ENCODE measurements at regions of chr1 and their contacts with region 1.

Region 1: GRCh38 chr1:155934097-155934935 is at the start of gene KHDC4:
- DNase-seq: peak; percentile 98

Region 2: GRCh38 chr1:155911156-155912055 is 22.9 kb before region 1 on chr1 and contains the start of gene RIT1:
- CTCF ChIA-PET with region 1: interaction called, 3 read pairs
- POLR2A ChIA-PET with region 1: interaction called, 13 read pairs
- DNase-seq: peak; percentile 93

Region 3: GRCh38 chr1:155946633-155947219 is 12.4 kb after region 1 on chr1:
- CTCF ChIA-PET with region 1: interaction called, 5 read pairs
- POLR2A ChIA-PET with region 1: interaction called, 25 read pairs
- DNase-seq: no peak

Region 4: DNA sequence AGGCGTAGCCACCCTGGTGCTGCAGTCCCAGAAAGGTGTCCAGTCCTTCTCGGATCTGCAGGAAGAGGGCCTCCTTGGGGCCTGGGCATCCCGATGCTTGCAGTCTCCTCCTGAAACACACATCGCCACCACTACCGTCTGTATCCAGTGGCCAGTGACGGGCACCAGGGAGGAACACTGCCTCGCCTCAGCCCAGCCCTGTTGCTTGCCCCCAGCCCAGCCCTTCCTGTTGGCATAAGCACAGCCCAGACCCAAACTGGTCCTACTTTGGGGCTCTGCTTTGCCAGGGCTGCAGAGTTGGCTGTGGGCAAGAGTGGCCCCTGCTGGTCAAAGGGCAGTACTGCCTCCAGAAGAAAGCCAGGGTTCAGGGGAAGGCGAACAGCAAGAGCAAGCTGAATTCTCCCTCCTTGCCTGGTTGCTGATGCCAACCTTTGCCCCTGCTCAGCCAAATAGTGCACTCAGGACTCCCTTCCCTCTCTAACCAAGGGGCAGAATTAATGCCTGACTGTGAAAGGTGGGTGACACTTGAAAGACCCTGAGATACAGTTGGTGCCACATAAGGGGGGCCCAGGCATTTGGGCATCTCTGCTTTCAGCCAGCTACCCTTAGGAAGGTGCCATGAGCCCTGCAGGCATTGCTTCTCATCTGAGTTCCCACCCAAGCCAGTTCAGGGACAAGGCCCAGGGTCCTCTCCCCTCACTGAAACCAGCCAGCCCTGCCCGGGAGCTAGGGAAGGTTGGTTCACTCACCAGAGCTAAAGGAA is 55.1 kb after region 1 on chr1:
- CTCF ChIA-PET with region 1: interaction called, 22 read pairs
- POLR2A ChIA-PET with region 1: interaction called, 53 read pairs
- DNase-seq: peak; percentile 87

Region 5: DNA sequence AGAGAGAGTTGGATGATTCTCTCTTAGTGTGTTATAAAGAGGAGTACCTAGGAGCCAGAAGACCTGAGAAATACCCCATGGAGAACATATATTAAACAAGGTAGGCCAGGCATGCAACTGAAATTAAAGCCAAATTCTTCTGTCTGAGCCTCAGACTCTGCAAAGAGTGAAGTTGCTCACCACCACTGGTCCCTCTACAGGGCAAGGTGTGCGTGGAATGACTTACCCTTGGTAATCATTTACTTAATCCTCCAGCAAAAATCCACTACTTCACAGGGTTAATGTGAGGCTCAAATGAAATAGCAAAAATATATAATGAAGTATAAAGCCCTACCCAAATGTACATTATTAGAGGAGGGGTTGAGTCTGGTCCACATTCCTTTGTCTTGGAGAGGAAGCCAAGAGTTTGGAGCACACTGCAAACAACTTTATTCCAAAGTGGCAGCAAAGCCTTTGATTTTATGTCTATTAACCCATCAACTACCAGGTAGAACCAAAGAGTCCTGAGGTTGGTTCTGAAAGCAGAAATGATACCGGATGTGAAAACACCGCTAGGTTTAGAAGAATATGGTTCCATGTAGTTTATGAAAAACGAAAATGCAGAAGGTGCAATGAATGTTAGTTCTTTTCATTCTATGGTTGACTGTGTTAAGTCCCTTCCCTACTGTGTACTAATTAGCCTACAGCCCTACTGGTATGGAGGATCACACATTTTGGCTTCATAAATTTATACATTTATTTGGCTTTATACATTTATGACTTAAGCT is 77.9 kb after region 1 on chr1:
- CTCF ChIA-PET with region 1: no interaction called
- POLR2A ChIA-PET with region 1: interaction called, 10 read pairs
- DNase-seq: no peak

Measured in HEK293T (cell line).